ENCODE measurements at regions of chr5 and their contacts with region 1.

Region 1: DNA sequence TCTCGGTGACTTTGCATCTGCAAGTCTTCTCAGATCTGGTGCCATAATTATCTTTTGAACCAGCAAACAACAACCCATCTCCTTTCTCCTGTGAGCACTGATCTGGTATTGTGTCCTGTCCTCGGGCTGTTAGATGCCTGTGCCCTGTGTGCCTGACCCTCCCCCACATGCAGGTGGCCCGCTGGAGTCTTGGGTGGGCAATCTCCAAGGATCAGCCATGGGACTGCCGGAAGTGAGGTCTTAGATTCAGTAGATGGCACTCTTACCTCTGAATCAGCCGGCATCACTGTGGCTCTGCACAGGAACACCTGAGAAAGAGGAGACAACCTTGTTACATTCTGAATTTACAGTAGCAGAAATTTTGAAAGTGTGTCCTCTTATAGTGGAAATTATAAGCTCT is 172.4 kb downstream of the IRX2 start:
- DNase-seq: no peak
- H3K4me3 ChIP-seq: no peak overlapping the region
- H3K27ac ChIP-seq: no peak overlapping the region
- H3K4me1 ChIP-seq: no peaks in the 10 kb centered on the region
- H3K27me3 ChIP-seq: no peaks in the 10 kb centered on the region
- CTCF ChIP-seq: no peak

Region 2: GRCh38 chr5:2515180-2515764 is 63.9 kb before region 1 on chr5:
- CTCF ChIA-PET with region 1: no interaction called
- dilution Hi-C with region 1: loop called (anchors 5 kb)
- in situ Hi-C with region 1: no loop called
- intact Hi-C with region 1: no loop called
- DNase-seq: no peak
- H3K4me3 ChIP-seq: no peak overlapping the region
- H3K27ac ChIP-seq: no peak overlapping the region
- H3K4me1 ChIP-seq: no peaks in the 10 kb centered on the region
- H3K27me3 ChIP-seq: no peaks in the 10 kb centered on the region
- CTCF ChIP-seq: no peak